Endothelial cell of umbilical vein (primary cell): ENCODE measurements at regions of chr20 and their contacts with region 1.

Region 1: GRCh38 chr20:63627129-63627750 is 339 bp upstream of the GMEB2 start:
- DNase-seq: peak; percentile 93
- H3K4me3 ChIP-seq: peak overlapping the region; percentile 82 to 100 (median 88)
- H3K27ac ChIP-seq: peak overlapping the region; percentile 51
- H3K4me1 ChIP-seq: peaks cover 16% of the 10 kb centered on the region
- H3K27me3 ChIP-seq: no peaks in the 10 kb centered on the region
- CTCF ChIP-seq: no peak
- POLR2A ChIP-seq: peak; percentile 83

Region 2: GRCh38 chr20:62832212-62832922 is 794.9 kb before region 1 on chr20:
- CTCF ChIA-PET with region 1: no interaction called
- POLR2A ChIA-PET with region 1: no interaction called
- dilution Hi-C with region 1: no loop called
- intact Hi-C with region 1: no loop called
- DNase-seq: no peak
- H3K4me3 ChIP-seq: no peak overlapping the region
- H3K27ac ChIP-seq: no peak overlapping the region
- H3K4me1 ChIP-seq: no peaks in the 10 kb centered on the region
- H3K27me3 ChIP-seq: no peaks in the 10 kb centered on the region
- CTCF ChIP-seq: no peak
- POLR2A ChIP-seq: no peak

Region 3: DNA sequence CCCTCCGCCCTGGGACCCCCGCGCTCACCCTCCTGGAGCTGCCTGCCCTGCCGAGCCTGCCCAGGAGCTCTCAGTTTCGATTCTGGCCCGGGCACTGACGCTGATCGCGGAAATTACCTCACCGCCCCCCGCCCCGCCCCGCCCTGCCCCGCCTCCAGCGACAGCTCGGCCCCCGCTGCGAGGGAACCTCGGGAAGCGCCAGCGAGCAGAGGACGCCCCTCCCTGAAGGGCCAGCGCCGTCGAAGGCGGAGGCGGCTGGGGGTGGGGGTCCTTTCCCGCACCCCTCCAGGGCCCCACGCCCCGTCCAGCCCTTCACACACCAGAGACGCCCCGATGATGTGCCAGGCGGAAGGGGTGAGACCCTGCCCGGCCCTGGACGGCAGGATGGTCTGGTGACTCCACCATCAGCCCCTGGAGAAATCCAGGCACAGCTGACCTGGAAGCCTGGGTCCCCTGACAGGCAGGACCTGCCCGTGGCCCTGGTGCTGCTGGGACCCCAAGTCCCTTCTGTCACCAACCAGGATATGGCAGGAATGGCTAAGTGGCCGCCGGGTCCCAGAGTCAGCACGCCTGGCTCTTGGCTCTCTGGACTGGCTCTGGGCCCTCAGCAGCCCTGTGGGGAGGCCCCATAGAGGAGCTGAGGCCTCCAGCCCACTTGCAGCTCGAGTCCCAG is 52.9 kb before region 1 on chr20 and contains the start of gene HELZ2:
- CTCF ChIA-PET with region 1: no interaction called
- POLR2A ChIA-PET with region 1: interaction called, 10 read pairs
- dilution Hi-C with region 1: no loop called
- intact Hi-C with region 1: loop called (anchors 5 kb)
- DNase-seq: peak; percentile 52
- H3K4me3 ChIP-seq: peak within 1 kb of the TSS; percentile 55 to 95 (median 87)
- H3K27ac ChIP-seq: peak within 1 kb of the TSS; percentile 72
- H3K4me1 ChIP-seq: peaks cover 10% of the 10 kb centered on the region
- H3K27me3 ChIP-seq: no peaks in the 10 kb centered on the region
- CTCF ChIP-seq: no peak
- POLR2A ChIP-seq: peak; percentile 53
- total RNA-seq, gene HELZ2: 29.2 and 33.2 TPM in 2 replicates

Region 4: DNA sequence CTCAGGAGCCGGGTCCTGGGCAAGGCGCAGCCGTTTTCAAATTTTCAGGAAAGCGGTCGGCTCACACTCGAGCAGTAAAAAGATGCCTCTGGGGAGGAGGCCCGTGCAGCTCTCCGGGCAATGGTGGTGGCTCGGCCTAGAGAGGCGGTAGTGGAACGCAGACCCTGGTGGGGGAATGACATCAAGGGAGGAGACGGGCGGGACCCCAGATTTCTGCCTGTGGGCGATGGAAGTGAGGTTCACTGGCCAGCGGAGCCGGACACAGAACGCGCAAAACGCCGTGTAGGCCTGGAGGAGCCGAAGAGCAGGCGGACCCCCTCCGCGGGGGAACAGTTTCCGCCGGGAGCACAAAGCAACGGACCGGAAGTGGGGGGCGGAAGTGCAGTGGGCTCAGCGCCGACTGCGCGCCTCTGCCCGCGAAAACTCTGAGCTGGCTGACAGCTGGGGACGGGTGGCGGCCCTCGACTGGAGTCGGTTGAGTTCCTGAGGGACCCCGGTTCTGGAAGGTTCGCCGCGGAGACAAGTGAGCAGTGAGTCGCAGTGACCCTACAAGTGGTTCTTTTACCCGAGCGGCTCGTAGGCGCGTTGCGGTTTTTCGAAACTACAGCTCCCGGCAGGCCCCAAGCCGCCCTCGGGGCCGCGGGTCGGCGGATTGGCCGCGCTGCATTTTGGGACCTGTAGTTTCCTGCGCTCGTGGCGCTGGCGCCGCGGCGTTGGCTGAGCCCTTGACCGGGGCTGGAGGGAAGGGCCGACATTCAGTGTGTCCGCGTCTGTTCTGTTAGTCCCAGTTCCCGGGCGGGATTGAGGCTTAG is 30.9 kb after region 1 on chr20 and contains the start of gene RTEL1:
- CTCF ChIA-PET with region 1: no interaction called
- POLR2A ChIA-PET with region 1: no interaction called
- dilution Hi-C with region 1: no loop called
- intact Hi-C with region 1: loop called (anchors 2 kb)
- DNase-seq: peak; percentile 93
- H3K4me3 ChIP-seq: peak within 1 kb of the TSS; percentile 60 to 83 (median 62)
- H3K27ac ChIP-seq: peak within 1 kb of the TSS; percentile 50
- H3K4me1 ChIP-seq: peaks cover 10% of the 10 kb centered on the region
- H3K27me3 ChIP-seq: no peaks in the 10 kb centered on the region
- CTCF ChIP-seq: no peak
- POLR2A ChIP-seq: peak; percentile 54
- total RNA-seq, gene RTEL1: 38.6 and 44.9 TPM in 2 replicates

Region 5: DNA sequence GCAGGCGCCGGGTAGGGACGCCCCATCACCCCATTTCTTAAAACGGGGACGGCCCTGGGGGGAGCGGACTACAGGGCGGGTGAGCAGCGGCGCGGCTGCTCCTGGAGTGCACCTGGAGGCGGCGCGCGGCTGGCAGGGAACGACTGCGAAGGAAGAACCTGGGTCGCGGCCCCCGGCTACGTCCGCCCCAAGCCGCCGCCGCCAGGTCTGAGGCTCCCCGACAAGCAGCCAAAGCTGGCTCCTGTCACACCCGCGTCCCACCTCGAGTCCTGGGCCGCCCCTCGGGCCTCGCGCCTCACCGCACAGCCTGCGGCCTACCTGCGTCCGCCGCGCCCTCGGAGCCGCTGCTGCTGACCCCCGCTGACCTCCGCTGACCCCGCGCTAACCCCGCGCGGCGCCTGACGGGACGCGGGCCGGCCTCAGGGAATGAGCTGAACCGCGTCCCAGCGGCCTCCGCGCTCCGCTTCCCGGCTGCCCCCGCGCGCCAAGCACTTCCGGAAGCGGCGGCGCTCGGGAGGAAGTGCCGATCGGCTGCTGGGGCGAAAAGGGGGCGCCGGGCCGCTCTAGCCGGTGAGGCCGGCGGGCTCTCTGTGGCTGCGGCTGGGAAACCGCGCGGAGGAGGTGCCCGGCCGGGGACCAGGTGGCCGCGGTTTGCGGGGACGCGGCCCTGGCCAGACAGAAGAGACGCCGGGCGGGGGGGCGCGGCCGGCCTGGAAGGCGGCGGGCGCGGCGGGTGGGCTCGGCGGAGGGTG is 80.5 kb after region 1 on chr20 and contains the starts of genes ARFRP1 and ZGPAT:
- CTCF ChIA-PET with region 1: interaction called, 3 read pairs
- POLR2A ChIA-PET with region 1: no interaction called
- dilution Hi-C with region 1: no loop called
- intact Hi-C with region 1: loop called (anchors 5 kb)
- DNase-seq: peak; percentile 81
- H3K4me3 ChIP-seq: peak within 1 kb of the TSS; percentile 62 to 77 (median 70)
- H3K27ac ChIP-seq: peak within 1 kb of the TSS; percentile 29
- H3K4me1 ChIP-seq: peaks cover 14% of the 10 kb centered on the region
- H3K27me3 ChIP-seq: no peaks in the 10 kb centered on the region
- CTCF ChIP-seq: no peak
- POLR2A ChIP-seq: peak; percentile 44
- total RNA-seq, gene ARFRP1: 51.6 and 56.3 TPM in 2 replicates
- total RNA-seq, gene ZGPAT: 29.3 and 31.7 TPM in 2 replicates